K562 (cell line): ENCODE measurements at regions of chr1 and their contacts with region 1.

Region 1: GRCh38 chr1:222713091-222713961 is 962 bp downstream of the BROX start:
- DNase-seq: peak; percentile 85 to 98 (median 88)
- ATAC-seq: peak; percentile 76
- H3K4me3 ChIP-seq: peak overlapping the region; percentile 71
- H3K27ac ChIP-seq: peak overlapping the region; percentile 98
- H3K4me1 ChIP-seq: peaks cover 19% of the 10 kb centered on the region in 2 experiments; a peak in 4 of 5 replicates
- H3K27me3 ChIP-seq: no peaks in the 10 kb centered on the region
- CTCF ChIP-seq: peak in 2 of 3 experiments; percentile 14 to 22; a peak in 2 of 6 replicates
- EP300 ChIP-seq: peak; percentile 36
- POLR2A ChIP-seq: peak; percentile 86
- RAD21 ChIP-seq: no peak

Region 2: DNA sequence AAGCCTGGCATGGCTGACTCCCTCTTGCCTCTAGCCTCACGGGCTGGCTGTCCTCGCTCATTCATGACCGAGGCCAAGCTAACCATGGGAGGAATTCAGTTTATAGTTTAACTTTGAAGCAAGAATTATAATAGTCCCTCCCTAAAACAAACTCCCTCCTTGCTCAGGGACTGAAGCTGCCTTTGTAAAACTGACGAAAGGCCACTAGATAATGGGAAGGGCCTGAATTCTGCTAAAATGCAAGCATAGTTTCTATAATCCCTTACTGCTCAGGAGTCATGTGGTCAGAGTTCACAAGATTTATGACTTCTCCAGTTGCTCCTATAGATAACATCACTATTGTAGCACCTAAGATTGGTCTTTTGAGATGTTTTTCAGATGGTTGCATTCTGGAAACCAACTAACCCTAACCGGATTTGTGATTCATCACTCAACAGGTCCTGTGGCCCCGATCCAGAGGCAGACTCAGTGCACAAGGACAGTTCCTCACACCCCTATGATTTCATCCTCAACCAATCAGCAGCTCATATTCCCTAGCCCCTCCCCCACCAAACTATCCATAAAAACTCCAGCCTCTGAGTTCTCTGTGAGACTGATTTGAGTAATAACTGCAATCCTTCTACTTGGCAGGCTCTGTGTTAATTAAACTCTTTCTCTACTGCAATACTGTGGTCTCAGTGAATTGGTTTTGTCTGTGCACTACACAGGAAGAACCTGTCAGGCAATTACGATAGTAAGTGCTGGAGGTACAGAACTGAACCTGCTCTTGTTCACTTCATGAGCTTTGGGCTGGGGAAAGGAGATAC is 191.8 kb before region 1 on chr1:
- CTCF ChIA-PET with region 1: no interaction called
- POLR2A ChIA-PET with region 1: no interaction called
- in situ Hi-C with region 1: no loop called
- intact Hi-C with region 1: no loop called
- DNase-seq: peak in 1 of 4 experiments; percentile 24
- ATAC-seq: peak; percentile 84
- H3K4me3 ChIP-seq: no peak overlapping the region
- H3K27ac ChIP-seq: no peak overlapping the region
- H3K4me1 ChIP-seq: no peaks in the 10 kb centered on the region; a peak in 1 of 5 replicates
- H3K27me3 ChIP-seq: peaks cover 15 to 29% of the 10 kb centered on the region in 2 experiments; a peak in 4 of 5 replicates
- CTCF ChIP-seq: no peak
- EP300 ChIP-seq: no peak
- POLR2A ChIP-seq: no peak
- RAD21 ChIP-seq: no peak

Region 3: DNA sequence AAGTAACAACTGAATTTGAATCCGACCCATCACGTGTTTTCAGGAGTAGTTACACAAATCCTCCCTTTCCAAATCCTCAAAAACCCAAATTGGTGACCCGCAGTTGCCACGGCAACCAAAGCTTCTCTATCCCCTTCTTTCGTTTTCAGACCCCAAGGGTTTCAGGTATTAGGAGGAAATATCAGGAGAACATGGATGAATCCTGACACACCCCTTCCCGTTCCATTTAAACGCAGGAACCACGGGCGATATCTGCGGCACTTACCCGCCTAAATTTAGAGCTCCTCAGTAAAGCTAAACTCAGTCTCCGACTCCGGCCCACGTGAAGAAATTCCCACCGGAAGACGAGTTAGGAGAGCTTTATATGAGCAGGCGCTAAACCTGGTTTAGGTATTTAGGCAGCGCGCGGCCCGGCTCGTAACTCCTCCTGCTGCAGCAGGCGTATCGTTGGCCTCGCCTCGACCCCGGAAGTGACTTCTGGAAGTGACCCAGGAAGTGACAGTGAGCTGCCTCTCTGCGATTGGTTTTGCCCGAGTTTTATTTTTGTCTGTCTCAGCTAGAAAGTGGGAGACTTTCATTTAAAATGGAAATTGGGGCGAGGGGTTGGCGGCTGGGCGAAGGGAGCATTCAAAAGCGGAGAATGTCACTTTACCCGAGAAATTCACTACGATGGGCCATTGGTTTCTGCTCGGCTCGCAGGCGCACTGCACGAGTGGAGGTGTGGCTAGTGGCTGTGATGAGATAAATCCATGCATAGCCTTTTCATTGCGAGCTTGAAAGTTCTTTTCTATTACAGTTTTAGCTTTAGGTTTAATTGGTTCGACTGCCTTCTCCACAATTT is 123.6 kb before region 1 on chr1 and contains the start of gene TAF1A:
- CTCF ChIA-PET with region 1: no interaction called
- POLR2A ChIA-PET with region 1: interaction called, 3 read pairs
- in situ Hi-C with region 1: no loop called
- intact Hi-C with region 1: loop called (anchors 2 kb)
- DNase-seq: peak; percentile 89 to 96 (median 90)
- ATAC-seq: peak; percentile 97
- H3K4me3 ChIP-seq: peak within 1 kb of the TSS; percentile 69
- H3K27ac ChIP-seq: peak within 1 kb of the TSS; percentile 91
- H3K4me1 ChIP-seq: peaks cover 0 to 3% of the 10 kb centered on the region in 2 experiments; a peak in 2 of 5 replicates
- H3K27me3 ChIP-seq: no peaks in the 10 kb centered on the region; a peak in 1 of 5 replicates
- CTCF ChIP-seq: no peak; a peak in 3 of 6 replicates
- EP300 ChIP-seq: no peak
- POLR2A ChIP-seq: peak; percentile 92
- RAD21 ChIP-seq: peak in 1 of 2 experiments; percentile 25; a peak in 2 of 4 replicates
- polyA plus RNA-seq, gene TAF1A: 33.6 to 36.8 TPM

Region 4: GRCh38 chr1:222643938-222644635 is 69.2 kb before region 1 on chr1:
- CTCF ChIA-PET with region 1: no interaction called
- POLR2A ChIA-PET with region 1: interaction called, 4 read pairs
- in situ Hi-C with region 1: no loop called
- intact Hi-C with region 1: loop called (anchors 1 kb)
- DNase-seq: peak; percentile 95 to 100 (median 96)
- ATAC-seq: peak; percentile 97
- H3K4me3 ChIP-seq: peak overlapping the region; percentile 88
- H3K27ac ChIP-seq: peak overlapping the region; percentile 88
- H3K4me1 ChIP-seq: no peaks in the 10 kb centered on the region; a peak in 2 of 5 replicates
- H3K27me3 ChIP-seq: no peaks in the 10 kb centered on the region
- CTCF ChIP-seq: no peak; a peak in 1 of 6 replicates
- EP300 ChIP-seq: peak; percentile 49
- POLR2A ChIP-seq: peak; percentile 98
- RAD21 ChIP-seq: no peak

Region 5: GRCh38 chr1:222754366-222755139 is 41.2 kb after region 1 on chr1:
- CTCF ChIA-PET with region 1: no interaction called
- POLR2A ChIA-PET with region 1: no interaction called
- in situ Hi-C with region 1: no loop called
- intact Hi-C with region 1: no loop called
- DNase-seq: no peak
- ATAC-seq: peak; percentile 67
- H3K4me3 ChIP-seq: no peak overlapping the region
- H3K27ac ChIP-seq: no peak overlapping the region
- H3K4me1 ChIP-seq: no peaks in the 10 kb centered on the region
- H3K27me3 ChIP-seq: peaks cover 3 to 4% of the 10 kb centered on the region in 2 experiments; a peak in 4 of 5 replicates
- CTCF ChIP-seq: no peak
- EP300 ChIP-seq: no peak
- POLR2A ChIP-seq: no peak
- RAD21 ChIP-seq: no peak